ENCODE measurements at regions of chr2 and their contacts with region 1.

Region 1: GRCh38 chr2:212520340-212520739 is 18.3 kb downstream of the ERBB4 start:
- DNase-seq: no peak
- H3K4me3 ChIP-seq: no peak overlapping the region
- H3K27ac ChIP-seq: no peak overlapping the region
- H3K4me1 ChIP-seq: no peaks in the 10 kb centered on the region
- H3K27me3 ChIP-seq: no peaks in the 10 kb centered on the region
- CTCF ChIP-seq: peak; percentile 39; the same call in 1 of the 2 replicates

Region 2: GRCh38 chr2:212005085-212005671 is 515.2 kb before region 1 on chr2:
- CTCF ChIA-PET with region 1: no interaction called
- POLR2A ChIA-PET with region 1: no interaction called
- intact Hi-C with region 1: loop called (anchors 10 kb)
- DNase-seq: no peak
- H3K4me3 ChIP-seq: no peak overlapping the region
- H3K27ac ChIP-seq: no peak overlapping the region
- H3K4me1 ChIP-seq: no peaks in the 10 kb centered on the region
- H3K27me3 ChIP-seq: no peaks in the 10 kb centered on the region
- CTCF ChIP-seq: peak; percentile 46

Region 3: GRCh38 chr2:212147921-212148513 is 372.3 kb before region 1 on chr2:
- CTCF ChIA-PET with region 1: no interaction called
- POLR2A ChIA-PET with region 1: no interaction called
- intact Hi-C with region 1: loop called (anchors 1 kb)
- DNase-seq: no peak
- H3K4me3 ChIP-seq: no peak overlapping the region
- H3K27ac ChIP-seq: no peak overlapping the region
- H3K4me1 ChIP-seq: no peaks in the 10 kb centered on the region
- H3K27me3 ChIP-seq: no peaks in the 10 kb centered on the region
- CTCF ChIP-seq: peak; percentile 64

Region 4: GRCh38 chr2:212177724-212178123 is 342.6 kb before region 1 on chr2:
- CTCF ChIA-PET with region 1: interaction called, 11 read pairs
- POLR2A ChIA-PET with region 1: no interaction called
- intact Hi-C with region 1: no loop called
- DNase-seq: no peak
- H3K4me3 ChIP-seq: no peak overlapping the region
- H3K27ac ChIP-seq: no peak overlapping the region
- H3K4me1 ChIP-seq: no peaks in the 10 kb centered on the region
- H3K27me3 ChIP-seq: no peaks in the 10 kb centered on the region
- CTCF ChIP-seq: no peak

Region 5: DNA sequence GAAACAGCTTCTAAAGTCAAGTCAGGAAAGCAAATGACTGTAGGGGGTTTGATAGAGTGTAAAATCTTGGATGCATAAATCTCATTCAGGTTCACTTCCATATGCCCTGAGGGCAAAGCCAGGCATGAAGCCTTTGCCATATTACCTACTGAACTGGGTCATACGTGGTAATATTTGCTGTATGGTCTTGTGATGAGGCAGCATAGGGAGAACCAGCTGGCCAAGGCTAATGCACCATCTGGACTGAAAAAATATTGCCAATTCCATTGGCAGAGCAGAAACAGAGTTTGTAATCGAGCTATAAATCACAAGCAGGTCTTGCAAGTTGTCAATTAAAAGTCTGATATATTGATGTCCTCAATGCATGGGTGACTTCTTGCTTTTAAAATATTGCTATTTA is 225.5 kb before region 1 on chr2:
- CTCF ChIA-PET with region 1: no interaction called
- POLR2A ChIA-PET with region 1: no interaction called
- intact Hi-C with region 1: no loop called
- DNase-seq: no peak
- H3K4me3 ChIP-seq: no peak overlapping the region
- H3K27ac ChIP-seq: no peak overlapping the region
- H3K4me1 ChIP-seq: no peaks in the 10 kb centered on the region
- H3K27me3 ChIP-seq: no peaks in the 10 kb centered on the region
- CTCF ChIP-seq: no peak